Activated CD4-positive, alpha-beta memory T cell treated with anti-CD3 and anti-CD28 coated beads for 36 hours (primary cell): ENCODE measurements at regions of chr1 and their contacts with region 1.

Region 1: GRCh38 chr1:11099310-11100149 is at the start of gene EXOSC10:
- DNase-seq: peak; percentile 96
- H3K4me3 Mint-ChIP-seq: peak within 1 kb of the TSS; percentile 96
- H3K27ac Mint-ChIP-seq: peak within 1 kb of the TSS; percentile 89
- H3K4me1 Mint-ChIP-seq: peaks cover 10% of the 10 kb centered on the region
- H3K27me3 Mint-ChIP-seq: no peaks in the 10 kb centered on the region
- total RNA-seq, gene EXOSC10: 62.1 to 70.0 TPM

Region 2: DNA sequence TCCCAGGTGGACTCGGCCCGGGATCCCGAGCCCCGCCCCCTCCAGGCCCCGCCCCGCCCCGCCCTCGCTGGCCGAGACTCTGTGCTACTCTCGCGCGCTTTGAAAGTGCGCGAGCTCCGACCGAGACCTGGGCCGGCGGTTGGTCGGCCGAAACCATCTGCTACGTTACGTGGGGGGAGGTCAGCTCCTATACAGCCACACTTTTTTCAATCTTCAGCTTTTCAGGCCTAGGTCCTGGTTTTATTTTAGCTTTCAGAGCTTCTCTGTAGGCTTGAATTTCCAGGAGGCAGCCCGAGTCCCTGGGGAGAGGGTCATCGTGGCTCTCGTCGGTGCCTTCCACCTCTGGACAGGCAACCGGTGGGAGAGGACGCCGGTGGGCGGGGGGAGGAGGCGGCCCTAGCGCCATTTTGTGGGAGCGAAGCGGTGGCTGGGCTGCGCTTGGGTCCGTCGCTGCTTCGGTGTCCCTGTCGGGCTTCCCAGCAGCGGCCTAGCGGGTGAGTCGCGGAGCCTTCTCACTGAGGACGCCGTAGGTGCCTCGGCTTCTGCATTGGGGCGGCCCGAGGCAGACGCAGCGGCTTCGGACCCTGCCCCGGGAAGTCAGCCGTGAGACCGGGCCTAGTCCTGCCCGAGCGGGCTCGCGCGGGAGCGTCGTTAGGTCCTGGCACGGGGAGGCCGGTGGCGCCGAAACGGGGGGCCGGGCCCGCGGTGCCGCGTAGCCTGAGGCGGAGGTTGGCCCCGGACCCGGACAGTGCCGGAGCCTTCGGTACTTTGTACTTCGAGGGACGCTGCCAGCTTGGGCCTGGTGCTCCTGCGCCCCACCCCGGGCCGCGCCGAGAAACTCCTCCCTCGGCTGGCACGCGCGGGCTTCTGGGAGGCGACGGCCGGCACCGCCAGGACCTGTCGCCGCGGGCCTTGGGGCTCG is 87.0 kb before region 1 on chr1 and contains the start of gene TARDBP:
- CTCF ChIA-PET with region 1: no interaction called
- POLR2A ChIA-PET with region 1: interaction called, 3 read pairs
- intact Hi-C with region 1: loop called (anchors 2 kb)
- DNase-seq: peak; percentile 92
- H3K4me3 Mint-ChIP-seq: peak within 1 kb of the TSS; percentile 87
- H3K27ac Mint-ChIP-seq: peak within 1 kb of the TSS; percentile 98
- H3K4me1 Mint-ChIP-seq: peaks cover 30% of the 10 kb centered on the region
- H3K27me3 Mint-ChIP-seq: no peaks in the 10 kb centered on the region
- total RNA-seq, gene TARDBP: 175 to 177 TPM

Region 3: GRCh38 chr1:11059990-11060830 is 39.3 kb before region 1 on chr1 and contains the start of gene SRM:
- CTCF ChIA-PET with region 1: interaction called, 7 read pairs
- POLR2A ChIA-PET with region 1: interaction called, 15 read pairs
- intact Hi-C with region 1: loop called (anchors 1 kb)
- DNase-seq: peak; percentile 93
- H3K4me3 Mint-ChIP-seq: peak within 1 kb of the TSS; percentile 94
- H3K27ac Mint-ChIP-seq: peak within 1 kb of the TSS; percentile 93
- H3K4me1 Mint-ChIP-seq: peaks cover 46% of the 10 kb centered on the region
- H3K27me3 Mint-ChIP-seq: no peaks in the 10 kb centered on the region
- total RNA-seq, gene SRM: 159 to 164 TPM

Region 4: DNA sequence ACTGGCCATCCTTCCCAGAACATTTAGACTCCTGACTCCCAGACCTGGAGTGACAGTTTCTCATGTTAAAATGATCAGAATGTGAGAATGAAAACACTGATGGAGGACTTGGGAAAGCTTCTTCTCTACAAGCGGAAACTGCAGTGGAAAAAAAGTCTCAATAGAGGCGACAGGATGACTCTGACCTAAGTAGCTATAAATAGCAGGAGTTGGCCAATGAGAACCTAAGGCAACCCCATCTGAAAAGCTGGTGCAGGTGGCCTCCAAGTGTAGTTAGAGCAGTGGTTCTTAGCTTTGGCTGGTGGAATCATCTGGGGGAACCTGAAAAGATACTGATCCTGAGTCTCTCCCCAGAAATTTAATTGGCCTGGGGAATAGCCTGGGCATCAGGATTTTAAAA is 44.4 kb after region 1 on chr1:
- CTCF ChIA-PET with region 1: no interaction called
- POLR2A ChIA-PET with region 1: no interaction called
- intact Hi-C with region 1: loop called (anchors 5 kb)
- DNase-seq: peak; percentile 16
- H3K4me3 Mint-ChIP-seq: no peak overlapping the region
- H3K27ac Mint-ChIP-seq: peak overlapping the region; percentile 66
- H3K4me1 Mint-ChIP-seq: peaks cover 18% of the 10 kb centered on the region
- H3K27me3 Mint-ChIP-seq: no peaks in the 10 kb centered on the region